Activated CD4-positive, alpha-beta T cell treated with anti-CD3 and anti-CD28 coated beads for 36 hours (primary cell): ENCODE measurements at regions of chr9 and their contacts with region 1.

Region 1: DNA sequence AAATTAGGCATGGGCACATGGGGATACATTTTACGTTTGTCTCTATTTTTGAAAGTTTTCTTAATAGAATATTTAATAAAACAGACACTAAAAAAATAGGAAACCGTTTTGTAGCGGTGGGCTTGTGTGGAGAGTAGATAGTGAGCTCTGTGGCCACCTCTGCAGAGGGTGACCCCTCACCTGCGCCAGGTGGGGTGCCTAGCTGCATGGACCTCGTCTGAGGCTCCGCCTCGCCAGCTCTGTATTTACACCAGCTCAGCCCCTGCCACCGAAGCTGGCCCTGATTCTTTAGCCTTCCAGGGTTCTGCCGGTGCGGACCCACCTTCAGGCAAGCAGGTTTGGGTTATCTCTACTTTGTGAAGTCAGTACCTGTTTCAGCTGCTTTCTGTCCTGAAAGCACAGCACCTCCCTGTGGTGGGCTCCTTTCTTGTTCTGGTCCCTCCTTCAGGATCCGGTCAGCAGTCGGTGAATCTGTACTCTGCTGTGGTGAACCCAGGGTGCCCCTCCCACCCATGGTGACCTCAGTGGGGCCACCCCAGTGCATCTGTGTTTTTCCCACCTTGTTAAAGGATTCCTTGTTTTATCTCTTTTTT is 105.2 kb upstream of the CACNA1B start:
- DNase-seq: peak; percentile 24
- ATAC-seq: no peak
- H3K4me3 Mint-ChIP-seq: no peak overlapping the region
- H3K27ac Mint-ChIP-seq: no peak overlapping the region
- H3K4me1 Mint-ChIP-seq: no peaks in the 10 kb centered on the region
- H3K27me3 Mint-ChIP-seq: no peaks in the 10 kb centered on the region

Region 2: GRCh38 chr9:137791947-137792346 is 19.6 kb after region 1 on chr9:
- CTCF ChIA-PET with region 1: no interaction called
- POLR2A ChIA-PET with region 1: interaction called, 4 read pairs
- intact Hi-C with region 1: loop called in 1 of 2 experiments (anchors 2 kb)
- DNase-seq: no peak
- ATAC-seq: no peak
- H3K4me3 Mint-ChIP-seq: no peak overlapping the region
- H3K27ac Mint-ChIP-seq: no peak overlapping the region
- H3K4me1 Mint-ChIP-seq: no peaks in the 10 kb centered on the region
- H3K27me3 Mint-ChIP-seq: no peaks in the 10 kb centered on the region